A673 (cell line): ENCODE measurements at regions of chr2 and their contacts with region 1.

Region 1: GRCh38 chr2:144516981-144517865 is 2.7 kb downstream of the ZEB2 start:
- DNase-seq: peak; percentile 83
- H3K4me3 ChIP-seq: peak overlapping the region; percentile 66
- H3K27ac ChIP-seq: peak overlapping the region; percentile 98
- H3K4me1 ChIP-seq: peaks cover 24% of the 10 kb centered on the region
- H3K27me3 ChIP-seq: no peaks in the 10 kb centered on the region
- CTCF ChIP-seq: no peak

Region 2: DNA sequence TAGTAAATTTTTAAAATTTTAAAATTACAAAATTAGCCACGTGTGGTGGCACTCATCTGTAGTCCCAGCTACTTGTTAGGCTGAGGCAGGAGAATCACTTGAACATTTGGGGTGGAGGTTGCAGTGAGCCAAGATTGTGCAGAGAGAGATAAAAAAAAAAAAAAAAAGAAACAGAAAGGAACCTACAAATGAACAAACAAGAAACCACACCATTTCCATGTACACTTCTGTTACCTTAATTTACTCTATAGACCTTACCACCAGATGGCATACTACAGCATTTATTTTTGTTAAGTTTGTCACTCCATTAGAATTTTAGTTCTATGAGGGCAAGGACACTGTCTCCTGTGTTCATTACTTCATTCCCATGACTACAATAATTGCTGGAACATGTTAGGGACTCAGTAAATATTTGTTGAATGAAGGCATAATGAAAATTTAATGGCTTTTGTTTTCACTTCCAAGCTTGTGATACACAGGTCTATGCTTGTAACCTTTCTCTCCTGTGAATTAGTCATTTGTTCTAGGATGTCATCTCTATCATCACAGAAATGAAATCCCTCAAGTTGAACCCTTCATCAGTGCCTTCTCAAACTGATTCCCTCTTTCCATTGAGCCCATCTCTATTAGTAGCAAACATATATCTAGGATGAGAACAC is 1312.0 kb before region 1 on chr2:
- CTCF ChIA-PET with region 1: interaction called, 10 read pairs
- POLR2A ChIA-PET with region 1: no interaction called
- intact Hi-C with region 1: no loop called
- DNase-seq: peak; percentile 43
- H3K4me3 ChIP-seq: no peak overlapping the region
- H3K27ac ChIP-seq: no peak overlapping the region
- H3K4me1 ChIP-seq: no peaks in the 10 kb centered on the region
- H3K27me3 ChIP-seq: no peaks in the 10 kb centered on the region
- CTCF ChIP-seq: peak; percentile 56

Region 3: DNA sequence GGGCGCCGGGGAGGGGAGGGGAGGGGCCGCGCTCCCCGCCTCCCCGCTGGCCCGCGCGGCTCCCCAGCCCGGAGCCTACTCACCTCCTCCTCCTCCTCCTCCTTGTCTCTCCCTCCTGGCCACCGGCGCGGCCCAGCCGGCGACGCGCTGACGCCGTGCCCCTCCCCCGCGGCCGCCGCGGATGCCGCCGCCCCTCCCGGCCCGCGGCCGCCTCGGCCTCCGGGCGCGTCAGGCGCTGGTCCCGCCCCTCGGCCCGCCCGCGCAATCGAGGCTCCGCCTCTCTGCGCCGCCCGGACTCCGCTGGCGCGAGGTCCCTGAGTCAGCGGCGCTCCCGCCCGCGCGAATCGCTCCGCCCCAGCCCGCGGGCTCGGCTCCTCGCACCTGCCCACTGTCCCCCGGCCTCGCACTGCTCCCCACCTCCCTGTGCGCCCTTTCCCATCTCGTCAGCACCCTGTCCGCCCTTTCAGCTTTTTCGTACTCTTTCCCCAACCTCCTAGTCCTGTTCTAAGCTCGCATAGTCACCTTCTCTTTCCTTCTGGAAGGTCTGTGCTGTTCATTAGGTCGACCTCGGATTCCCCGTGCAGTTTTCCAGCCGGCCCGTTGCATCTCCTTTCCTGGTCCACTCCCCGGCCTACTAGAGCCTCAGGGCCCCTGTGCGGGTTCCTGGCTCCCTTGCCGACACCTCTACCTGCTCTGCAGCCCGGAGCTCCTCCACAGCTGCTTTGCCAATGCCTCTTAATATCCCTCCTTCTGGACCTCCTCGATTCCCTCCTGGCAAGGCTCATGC is 184.7 kb before region 1 on chr2:
- CTCF ChIA-PET with region 1: no interaction called
- POLR2A ChIA-PET with region 1: no interaction called
- intact Hi-C with region 1: loop called (anchors 5 kb)
- DNase-seq: peak; percentile 94
- H3K4me3 ChIP-seq: peak overlapping the region; percentile 60
- H3K27ac ChIP-seq: peak overlapping the region; percentile 95
- H3K4me1 ChIP-seq: peaks cover 13% of the 10 kb centered on the region
- H3K27me3 ChIP-seq: no peaks in the 10 kb centered on the region
- CTCF ChIP-seq: no peak

Region 4: GRCh38 chr2:144414324-144414845 is 102.8 kb before region 1 on chr2:
- CTCF ChIA-PET with region 1: no interaction called
- POLR2A ChIA-PET with region 1: no interaction called
- intact Hi-C with region 1: no loop called
- DNase-seq: no peak
- H3K4me3 ChIP-seq: no peak overlapping the region
- H3K27ac ChIP-seq: peak overlapping the region; percentile 33
- H3K4me1 ChIP-seq: peaks cover 4% of the 10 kb centered on the region
- H3K27me3 ChIP-seq: no peaks in the 10 kb centered on the region
- CTCF ChIP-seq: no peak

Region 5: DNA sequence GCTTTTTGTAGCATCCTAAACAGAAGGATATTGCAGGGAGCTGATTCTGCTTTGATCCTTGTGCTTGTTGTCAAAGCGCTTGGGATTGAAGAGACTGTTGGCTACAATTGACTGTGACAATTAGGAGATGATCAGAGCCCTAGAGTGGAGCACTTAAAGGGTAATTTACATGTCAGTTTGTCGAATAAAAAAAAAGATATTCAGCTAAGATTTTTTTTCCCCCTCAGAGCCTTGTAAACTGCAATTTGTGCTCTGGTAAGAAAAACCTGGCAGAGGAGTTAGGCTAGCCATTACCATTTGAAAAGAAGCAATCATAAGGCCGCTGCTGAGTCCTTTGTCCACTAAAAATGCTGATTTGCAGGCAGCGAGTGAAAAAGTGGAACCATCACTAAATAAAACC is 50.5 kb after region 1 on chr2:
- CTCF ChIA-PET with region 1: no interaction called
- POLR2A ChIA-PET with region 1: no interaction called
- intact Hi-C with region 1: no loop called
- DNase-seq: no peak
- H3K4me3 ChIP-seq: no peak overlapping the region
- H3K27ac ChIP-seq: no peak overlapping the region
- H3K4me1 ChIP-seq: no peaks in the 10 kb centered on the region
- H3K27me3 ChIP-seq: no peaks in the 10 kb centered on the region
- CTCF ChIP-seq: no peak

Region 6: DNA sequence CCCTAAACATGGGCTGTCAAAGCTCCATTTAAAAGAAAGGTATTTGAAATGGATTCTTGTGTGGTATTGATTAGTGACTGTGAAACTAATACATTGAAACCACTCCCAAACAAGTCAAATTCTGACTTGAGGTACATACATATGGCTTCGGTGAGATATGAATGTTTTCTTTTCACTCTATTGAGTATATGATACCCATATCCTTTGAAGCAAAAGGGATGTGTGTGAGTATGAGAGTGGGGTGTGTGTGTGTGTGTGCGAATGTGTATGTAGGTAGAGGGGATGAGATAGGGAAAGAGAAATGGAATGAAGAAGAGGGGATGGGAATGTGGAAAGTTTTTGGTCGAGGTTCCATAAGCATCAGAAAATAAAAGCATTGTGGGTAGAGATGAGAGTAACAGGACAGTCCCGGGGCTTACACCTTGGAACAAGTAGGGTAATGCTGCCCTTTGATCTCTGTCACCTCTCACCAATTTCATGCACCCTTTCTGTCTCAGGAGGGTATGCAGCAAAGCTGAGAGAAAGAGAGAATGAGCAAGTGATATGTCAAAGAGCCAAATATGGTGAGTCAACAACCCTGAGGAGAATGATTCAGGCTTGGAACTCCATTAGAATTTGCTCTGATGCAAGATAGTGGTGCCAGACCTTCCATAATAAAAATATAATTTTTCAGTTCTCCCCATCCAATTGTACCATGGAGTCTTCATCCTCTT is 66.7 kb after region 1 on chr2:
- CTCF ChIA-PET with region 1: no interaction called
- POLR2A ChIA-PET with region 1: no interaction called
- intact Hi-C with region 1: no loop called
- DNase-seq: no peak
- H3K4me3 ChIP-seq: no peak overlapping the region
- H3K27ac ChIP-seq: no peak overlapping the region
- H3K4me1 ChIP-seq: no peaks in the 10 kb centered on the region
- H3K27me3 ChIP-seq: no peaks in the 10 kb centered on the region
- CTCF ChIP-seq: no peak

Region 7: DNA sequence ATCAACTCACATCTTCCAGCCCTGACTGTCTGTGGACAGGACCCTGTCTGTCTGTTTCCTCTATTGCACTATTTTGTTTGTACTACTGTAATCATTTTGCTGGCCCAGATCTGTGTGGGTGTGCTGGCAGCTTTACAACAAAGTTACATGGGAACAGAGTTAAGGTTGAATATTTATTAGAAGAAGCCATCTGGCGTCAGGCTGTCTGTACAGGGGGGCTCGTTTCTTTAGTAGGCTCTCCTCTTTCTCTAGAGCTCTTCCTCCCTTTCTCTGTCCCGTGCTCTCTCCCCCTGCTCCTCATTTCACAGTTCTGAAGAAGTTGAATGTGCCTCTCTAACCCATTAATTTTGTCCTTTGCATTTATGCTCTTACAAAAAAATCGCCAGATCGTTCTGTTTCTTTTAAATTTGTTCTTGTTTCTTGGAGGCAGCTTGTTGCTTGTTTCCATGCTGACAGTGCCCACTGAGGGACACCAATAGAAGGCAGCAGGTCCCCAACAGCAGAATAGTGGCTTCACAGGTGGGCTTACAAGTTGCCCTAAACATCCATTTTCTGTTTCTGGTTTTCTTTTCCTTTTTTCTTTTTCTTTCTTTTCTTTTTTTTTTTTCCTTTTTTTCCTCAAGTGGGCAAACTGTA is 317.9 kb after region 1 on chr2:
- CTCF ChIA-PET with region 1: no interaction called
- POLR2A ChIA-PET with region 1: no interaction called
- intact Hi-C with region 1: loop called (anchors 10 kb)
- DNase-seq: peak; percentile 89
- H3K4me3 ChIP-seq: peak overlapping the region; percentile 12
- H3K27ac ChIP-seq: peak overlapping the region; percentile 81
- H3K4me1 ChIP-seq: peaks cover 54% of the 10 kb centered on the region
- H3K27me3 ChIP-seq: no peaks in the 10 kb centered on the region
- CTCF ChIP-seq: 0 out of 2 replicates have a peak, but pooled peaks have one; percentile 7

Region 8: GRCh38 chr2:145228506-145228905 is 711.3 kb after region 1 on chr2:
- CTCF ChIA-PET with region 1: no interaction called
- POLR2A ChIA-PET with region 1: no interaction called
- intact Hi-C with region 1: no loop called
- DNase-seq: peak; percentile 12
- H3K4me3 ChIP-seq: no peak overlapping the region
- H3K27ac ChIP-seq: no peak overlapping the region
- H3K4me1 ChIP-seq: no peaks in the 10 kb centered on the region
- H3K27me3 ChIP-seq: no peaks in the 10 kb centered on the region
- CTCF ChIP-seq: no peak

Region 9: GRCh38 chr2:145752091-145752806 is 1235.0 kb after region 1 on chr2:
- CTCF ChIA-PET with region 1: no interaction called
- POLR2A ChIA-PET with region 1: no interaction called
- intact Hi-C with region 1: loop called (anchors 5 kb)
- DNase-seq: peak; percentile 94
- H3K4me3 ChIP-seq: no peak overlapping the region
- H3K27ac ChIP-seq: peak overlapping the region; percentile 87
- H3K4me1 ChIP-seq: peaks cover 47% of the 10 kb centered on the region
- H3K27me3 ChIP-seq: no peaks in the 10 kb centered on the region
- CTCF ChIP-seq: peak; percentile 82